Keratinocyte (primary cell): ENCODE measurements at regions of chr14 and their contacts with region 1.

Region 1: DNA sequence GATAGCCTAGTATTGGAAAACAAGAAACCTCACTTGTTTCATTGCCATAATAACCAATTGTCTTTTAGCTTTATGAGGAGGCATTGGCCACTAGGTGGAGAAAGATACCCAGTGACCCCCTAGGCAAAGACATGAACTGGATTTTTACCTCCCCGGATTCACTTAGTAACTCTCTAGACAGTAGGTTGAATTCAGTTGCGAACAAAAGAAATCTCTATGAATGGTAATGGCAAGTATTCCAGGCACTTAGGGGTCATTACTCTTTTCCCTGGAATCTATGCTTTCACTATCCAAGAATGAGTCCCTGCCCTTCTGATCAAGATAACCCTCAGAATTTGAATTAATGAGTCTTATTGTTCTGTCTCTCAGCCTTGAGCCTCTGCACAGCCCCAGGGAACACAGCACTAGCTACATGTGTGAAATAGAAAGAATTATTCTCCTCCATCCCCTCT is 29.5 kb upstream of the RHOJ start:
- DNase-seq: peak; percentile 80
- H3K4me3 ChIP-seq: no peak overlapping the region
- H3K27ac ChIP-seq: peak overlapping the region; percentile 39
- H3K4me1 ChIP-seq: peaks cover 38% of the 10 kb centered on the region
- H3K27me3 ChIP-seq: no peaks in the 10 kb centered on the region
- CTCF ChIP-seq: peak; percentile 54 to 60 (median 59)

Region 2: GRCh38 chr14:63257299-63257698 is 82.5 kb after region 1 on chr14:
- dilution Hi-C with region 1: loop called (anchors 5 kb)
- DNase-seq: no peak
- H3K4me3 ChIP-seq: no peak overlapping the region
- H3K27ac ChIP-seq: no peak overlapping the region
- H3K4me1 ChIP-seq: no peaks in the 10 kb centered on the region
- H3K27me3 ChIP-seq: no peaks in the 10 kb centered on the region
- CTCF ChIP-seq: no peak